ENCODE measurements at regions of chr20 and their contacts with region 1.

Region 1: GRCh38 chr20:45415774-45416637 is at the start of gene PIGT:
- DNase-seq: peak; percentile 91
- H3K4me3 ChIP-seq: peak within 1 kb of the TSS; percentile 98
- H3K27ac ChIP-seq: peak within 1 kb of the TSS; percentile 84
- H3K4me1 ChIP-seq: peaks cover 55% of the 10 kb centered on the region
- CTCF ChIP-seq: no peak
- total RNA-seq, gene PIGT: 75.7 and 104 TPM in 2 replicates

Region 2: GRCh38 chr20:45362804-45363610 is 53.0 kb before region 1 on chr20 and contains the start of gene SYS1:
- CTCF ChIA-PET with region 1: no interaction called
- POLR2A ChIA-PET with region 1: interaction called, 6 read pairs
- intact Hi-C with region 1: loop called (anchors 1 kb)
- DNase-seq: peak; percentile 98
- H3K4me3 ChIP-seq: peak within 1 kb of the TSS; percentile 76
- H3K27ac ChIP-seq: peak within 1 kb of the TSS; percentile 54
- H3K4me1 ChIP-seq: peaks cover 43% of the 10 kb centered on the region
- CTCF ChIP-seq: peak; percentile 89
- total RNA-seq, gene SYS1: 22.3 and 37.6 TPM in 2 replicates

Region 3: GRCh38 chr20:45368221-45368980 is 47.6 kb before region 1 on chr20:
- CTCF ChIA-PET with region 1: interaction called, 5 read pairs
- POLR2A ChIA-PET with region 1: interaction called, 6 read pairs
- intact Hi-C with region 1: loop called (anchors 1 kb)
- DNase-seq: peak; percentile 97
- H3K4me3 ChIP-seq: peak overlapping the region; percentile 50
- H3K27ac ChIP-seq: peak overlapping the region; percentile 83
- H3K4me1 ChIP-seq: peaks cover 74% of the 10 kb centered on the region
- CTCF ChIP-seq: no peak

Measured in OCI-LY7 (cell line).